Dendritic cell treated with granulocyte-macrophage colony-stimulating factor and Interleukin-4, amounts not matched to agents 40 ng/mL and 50 ng/mL, for 4 days (primary cell): ENCODE measurements at regions of chr9 and their contacts with region 1.

Region 1: DNA sequence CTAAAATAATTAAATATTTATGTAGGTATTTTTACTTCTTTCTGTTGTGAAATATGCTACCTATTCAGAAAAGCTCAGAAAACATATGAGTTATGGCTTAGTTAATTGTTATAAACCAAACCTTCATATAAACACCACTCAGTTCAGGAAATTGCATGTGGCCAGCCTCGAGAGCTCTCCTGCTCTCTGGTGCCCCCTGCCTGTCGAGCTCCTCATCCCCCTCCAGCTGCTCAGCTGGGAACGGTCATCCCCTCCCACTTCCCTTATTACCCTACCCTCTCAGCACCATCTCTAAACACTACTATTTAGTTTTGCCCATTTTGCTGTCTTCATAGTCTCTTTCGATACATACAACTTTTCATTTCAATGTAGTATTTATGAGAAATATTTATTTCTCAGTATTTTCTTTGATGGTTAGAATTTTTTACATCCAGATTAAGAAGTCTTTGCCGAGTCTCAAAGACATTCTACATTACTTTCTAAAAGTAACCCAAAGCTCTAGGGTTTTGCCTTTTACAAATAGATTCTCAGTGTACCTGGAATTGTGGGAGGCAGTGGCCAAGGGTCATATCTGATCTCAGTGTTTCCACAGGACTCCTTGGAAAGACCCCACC is 51.2 kb upstream of the SEMA4D start:
- H3K4me3 Mint-ChIP-seq: no peak overlapping the region
- H3K27ac Mint-ChIP-seq: no peak overlapping the region
- H3K4me1 Mint-ChIP-seq: peaks cover 28% of the 10 kb centered on the region
- H3K27me3 Mint-ChIP-seq: no peaks in the 10 kb centered on the region

Region 2: GRCh38 chr9:89334151-89334550 is 215.0 kb before region 1 on chr9:
- intact Hi-C with region 1: loop called (anchors 5 kb)
- H3K4me3 Mint-ChIP-seq: no peak overlapping the region
- H3K27ac Mint-ChIP-seq: no peak overlapping the region
- H3K4me1 Mint-ChIP-seq: no peaks in the 10 kb centered on the region
- H3K27me3 Mint-ChIP-seq: no peaks in the 10 kb centered on the region

Region 3: DNA sequence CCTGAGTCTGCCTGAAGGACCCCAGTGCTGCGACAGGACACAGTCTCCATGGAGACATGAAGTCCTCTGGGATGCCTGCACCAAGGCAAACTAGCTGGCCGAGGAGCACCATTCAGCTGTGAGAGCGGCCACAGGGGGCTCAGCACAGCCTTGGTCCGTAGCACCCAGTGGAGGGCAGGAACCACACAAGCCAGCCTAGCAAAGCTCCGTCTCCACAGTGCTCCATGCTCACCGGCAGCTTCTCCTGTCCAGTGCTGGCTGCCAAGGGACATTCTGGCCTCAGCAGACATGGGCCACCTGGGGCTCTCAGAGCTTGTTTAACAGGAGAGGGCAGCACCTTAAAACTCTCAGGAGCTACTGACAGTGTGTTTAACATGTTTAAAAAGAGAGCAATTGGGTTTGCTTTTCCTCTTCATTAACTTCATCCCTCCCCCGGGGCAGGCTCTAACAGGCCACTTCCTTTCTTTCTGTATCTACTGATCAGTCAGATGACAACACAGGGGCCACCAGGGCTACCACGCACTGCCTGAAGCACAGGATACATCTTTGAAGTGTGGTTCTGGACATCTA is 173.9 kb before region 1 on chr9:
- intact Hi-C with region 1: loop called (anchors 5 kb)
- H3K4me3 Mint-ChIP-seq: no peak overlapping the region
- H3K27ac Mint-ChIP-seq: peak overlapping the region; percentile 13
- H3K4me1 Mint-ChIP-seq: peaks cover 40% of the 10 kb centered on the region
- H3K27me3 Mint-ChIP-seq: no peaks in the 10 kb centered on the region

Region 4: DNA sequence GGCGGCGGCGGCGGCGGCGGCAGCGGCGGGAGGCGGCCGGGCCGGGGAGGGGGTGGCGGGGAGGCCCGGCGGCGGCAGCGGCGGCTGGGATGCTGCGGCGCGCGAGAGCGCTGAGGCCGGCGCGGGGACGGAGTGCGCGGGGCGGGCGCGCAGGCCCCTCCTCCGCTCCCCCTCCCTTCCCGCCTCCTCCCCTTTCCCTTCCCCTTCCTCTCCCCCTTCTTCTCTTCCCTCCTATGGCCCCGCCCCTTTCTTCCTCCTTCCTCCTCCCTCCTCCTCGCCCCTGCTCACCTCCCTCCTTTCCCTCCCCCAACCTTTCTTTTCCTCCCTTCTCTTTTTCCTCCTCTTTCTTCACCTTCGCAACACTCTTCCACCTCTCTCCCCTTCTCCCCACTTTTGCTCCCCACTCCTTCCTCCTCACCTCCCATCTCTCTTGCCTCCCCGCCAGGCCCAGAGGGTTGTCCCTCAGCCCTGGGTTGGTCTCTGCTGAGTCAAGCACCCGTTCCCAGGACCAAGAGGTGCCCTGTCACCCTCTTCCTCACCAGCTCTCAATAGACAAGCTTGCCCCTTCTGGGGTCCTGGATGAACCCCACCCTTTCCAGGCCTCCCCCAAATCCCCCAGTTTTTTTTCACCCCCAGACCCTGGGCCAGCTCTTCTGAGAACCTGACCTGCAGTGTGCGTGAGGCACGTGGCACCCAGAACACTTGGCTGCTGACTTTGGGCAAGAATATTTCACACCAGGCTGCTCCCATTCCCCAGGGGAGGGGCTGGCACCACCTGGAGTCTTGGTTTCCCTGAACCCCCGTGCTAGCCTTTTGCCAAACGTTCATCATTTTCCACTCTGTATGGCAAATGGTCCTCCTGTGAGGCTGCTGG is 50.9 kb before region 1 on chr9 and contains the start of gene SEMA4D:
- intact Hi-C with region 1: loop called (anchors 5 kb)
- H3K4me3 Mint-ChIP-seq: peak within 1 kb of the TSS; percentile 74
- H3K27ac Mint-ChIP-seq: peak within 1 kb of the TSS; percentile 76
- H3K4me1 Mint-ChIP-seq: peaks cover 66% of the 10 kb centered on the region
- H3K27me3 Mint-ChIP-seq: peaks cover 2% of the 10 kb centered on the region

Region 5: GRCh38 chr9:89961616-89962341 is 412.6 kb after region 1 on chr9:
- intact Hi-C with region 1: no loop called
- H3K4me3 Mint-ChIP-seq: peak overlapping the region; percentile 20
- H3K27ac Mint-ChIP-seq: peak overlapping the region; percentile 24
- H3K4me1 Mint-ChIP-seq: peaks cover 29% of the 10 kb centered on the region
- H3K27me3 Mint-ChIP-seq: no peaks in the 10 kb centered on the region